ENCODE measurements at regions of chr1 and their contacts with region 1.

Region 1: GRCh38 chr1:223081181-223081994 is 61.7 kb downstream of the TLR5 start:
- DNase-seq: peak; percentile 83
- H3K4me3 ChIP-seq: peak overlapping the region; percentile 56
- H3K27ac ChIP-seq: peak overlapping the region; percentile 77
- H3K4me1 ChIP-seq: peaks cover 30% of the 10 kb centered on the region
- H3K27me3 ChIP-seq: no peaks in the 10 kb centered on the region
- CTCF ChIP-seq: peak; percentile 99

Region 2: DNA sequence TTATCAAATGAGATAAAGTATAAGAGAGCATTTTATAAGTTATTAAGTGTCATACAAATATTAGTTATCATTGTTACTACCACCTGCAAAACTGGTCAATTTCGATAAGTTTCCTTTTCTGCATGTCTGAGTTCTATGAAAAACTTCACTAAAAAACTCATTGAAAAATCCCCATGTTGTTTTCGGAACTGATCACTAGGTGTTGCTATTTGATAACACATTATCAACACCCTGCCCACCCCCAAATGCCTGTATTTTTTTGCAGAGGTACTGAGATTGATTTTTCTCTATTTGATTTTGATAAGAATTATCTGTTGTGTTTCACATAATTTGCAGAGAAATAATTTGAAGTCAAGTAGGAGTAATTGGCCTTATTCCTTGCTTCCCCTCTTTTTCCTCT is 288.6 kb before region 1 on chr1:
- intact Hi-C with region 1: loop called (anchors 5 kb)
- DNase-seq: no peak
- H3K4me3 ChIP-seq: no peak overlapping the region
- H3K27ac ChIP-seq: no peak overlapping the region
- H3K4me1 ChIP-seq: peaks cover 5% of the 10 kb centered on the region
- H3K27me3 ChIP-seq: no peaks in the 10 kb centered on the region
- CTCF ChIP-seq: peak; percentile 71

Measured in left ventricle myocardium inferior (tissue), 1 donor.